ENCODE measurements at regions of chr11 and their contacts with region 1.

Region 1: DNA sequence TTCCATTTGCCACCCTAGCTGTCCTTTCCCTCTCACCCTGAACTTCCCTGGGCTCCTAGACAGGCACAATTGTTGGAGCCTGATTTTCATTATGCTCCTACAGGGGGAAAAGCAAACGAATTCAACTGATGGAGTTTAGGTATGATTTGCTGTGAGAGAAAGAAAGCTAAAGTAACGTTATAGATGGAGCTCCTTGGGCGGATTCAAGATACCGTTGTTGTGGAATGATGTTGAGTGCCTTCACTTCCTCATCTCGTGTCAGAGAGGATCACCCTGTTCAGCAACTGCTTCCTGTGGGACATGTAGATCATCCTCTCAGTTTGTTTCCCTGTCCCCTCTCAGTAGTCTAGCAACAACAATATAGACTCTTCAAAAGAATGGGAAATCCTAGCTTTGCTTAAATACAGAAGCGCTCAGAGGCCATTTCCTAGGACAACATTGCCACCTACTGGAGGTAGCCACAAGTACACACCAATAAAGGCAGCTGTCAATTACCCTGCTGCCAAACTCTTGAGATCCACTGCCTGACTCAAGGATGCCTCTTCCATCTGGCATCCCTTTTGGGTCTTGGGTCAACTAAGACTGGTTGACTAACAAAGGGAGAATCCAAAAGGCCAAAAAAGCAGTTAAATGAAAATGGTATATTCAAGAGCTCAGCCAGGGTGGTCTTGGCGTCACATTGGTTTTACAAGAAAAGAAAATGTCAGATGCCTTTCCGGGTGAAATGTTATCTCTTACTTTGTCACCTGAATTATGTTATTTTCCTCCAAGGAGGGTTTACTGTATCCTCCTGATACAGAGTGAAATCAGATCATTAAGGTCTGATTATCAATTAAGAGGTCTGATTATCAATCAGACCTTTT is 13.5 kb upstream of the DTX4 start:
- DNase-seq: peak; percentile 58 to 91
- H3K4me3 ChIP-seq: no peak overlapping the region
- H3K27ac ChIP-seq: no peak overlapping the region
- H3K4me1 ChIP-seq: peaks cover 0 to 5% (median 2%) of the 10 kb centered on the region in 4 donors
- H3K27me3 ChIP-seq: peaks cover 0 to 6% (median 0%) of the 10 kb centered on the region in 3 donors
- CTCF ChIP-seq: peak in 5 of 7 experiments; percentile 66 to 84 (median 74)
- EP300 ChIP-seq: no peak
- POLR2A ChIP-seq: no peak

Region 2: GRCh38 chr11:59076876-59077571 is 81.4 kb before region 1 on chr11:
- intact Hi-C with region 1: no loop called
- DNase-seq: no peak
- H3K4me3 ChIP-seq: no peak overlapping the region
- H3K27ac ChIP-seq: no peak overlapping the region
- H3K4me1 ChIP-seq: no peaks in the 10 kb centered on the region
- H3K27me3 ChIP-seq: peaks cover 0 to 12% (median 0%) of the 10 kb centered on the region in 3 donors
- CTCF ChIP-seq: no peak
- EP300 ChIP-seq: no peak
- POLR2A ChIP-seq: no peak

Region 3: GRCh38 chr11:59106363-59107336 is 51.8 kb before region 1 on chr11 and contains the start of gene FAM111B:
- intact Hi-C with region 1: loop called (anchors 10 kb)
- DNase-seq: peak; percentile 86 to 95
- H3K4me3 ChIP-seq: peak within 1 kb of the TSS; percentile 50 to 65 (median 56)
- H3K27ac ChIP-seq: peak within 1 kb of the TSS; percentile 24 to 61 (median 58)
- H3K4me1 ChIP-seq: peaks cover 14 to 43% (median 31%) of the 10 kb centered on the region in 4 donors
- H3K27me3 ChIP-seq: peaks cover 0 to 41% (median 0%) of the 10 kb centered on the region in 3 donors
- CTCF ChIP-seq: no peak
- EP300 ChIP-seq: no peak
- POLR2A ChIP-seq: no peak
- total RNA-seq, gene FAM111B: 0.29 to 37.9 (median 9.2) TPM